AG04450 (cell line): ENCODE measurements at regions of chr14 and their contacts with region 1.

Region 1: GRCh38 chr14:99982537-99983250 is 82.5 kb upstream of the EVL start:
- DNase-seq: peak; percentile 45
- H3K4me3 ChIP-seq: no peak overlapping the region
- H3K27ac ChIP-seq: no peak overlapping the region
- H3K27me3 ChIP-seq: no peaks in the 10 kb centered on the region
- CTCF ChIP-seq: peak; percentile 93

Region 2: GRCh38 chr14:99872786-99873440 is 109.8 kb before region 1 on chr14:
- CTCF ChIA-PET with region 1: no interaction called
- POLR2A ChIA-PET with region 1: no interaction called
- DNase-seq: no peak
- H3K4me3 ChIP-seq: no peak overlapping the region
- H3K27ac ChIP-seq: no peak overlapping the region
- H3K27me3 ChIP-seq: no peaks in the 10 kb centered on the region
- CTCF ChIP-seq: no peak

Region 3: DNA sequence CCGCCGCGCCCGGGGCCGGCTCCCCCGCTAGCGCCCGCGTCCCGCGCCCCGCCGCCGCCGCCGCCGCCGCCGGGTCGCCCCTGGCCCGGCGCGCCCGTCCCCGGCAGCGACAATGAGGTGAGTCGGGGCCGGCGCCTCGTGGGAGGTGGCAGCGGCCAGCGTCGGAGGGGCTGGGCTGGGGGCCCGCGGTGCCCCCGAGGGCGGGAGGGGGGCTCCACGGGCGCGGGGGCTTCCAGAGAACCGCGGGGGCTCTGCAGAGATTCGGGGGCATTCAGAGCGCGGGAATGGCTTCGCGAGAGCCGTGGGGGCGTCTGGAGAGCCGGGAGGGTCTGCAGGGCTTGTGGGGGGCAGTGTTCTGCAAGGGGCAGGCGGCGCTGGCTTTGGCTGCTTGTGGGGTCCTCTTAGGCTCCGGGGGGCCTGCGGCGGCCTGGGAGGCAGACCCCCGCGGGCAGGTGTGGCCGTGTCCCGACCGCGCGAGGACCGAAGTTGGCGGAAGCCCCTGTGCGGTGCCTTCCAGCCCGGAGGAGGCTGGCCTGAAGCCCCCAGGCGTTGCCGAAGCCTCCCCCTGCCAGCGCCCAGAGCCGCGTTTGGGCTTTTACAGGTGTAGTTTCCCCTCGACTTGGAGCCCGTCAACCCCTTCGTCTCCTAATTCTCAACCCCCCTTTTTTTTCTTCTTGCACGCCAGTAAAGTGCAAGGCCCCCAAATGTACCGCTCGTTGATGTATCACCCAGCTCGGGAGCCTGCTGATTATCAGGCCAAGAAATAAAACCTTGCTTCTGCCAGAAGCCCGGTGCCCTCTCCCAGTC is 10.6 kb before region 1 on chr14:
- CTCF ChIA-PET with region 1: interaction called, 11 read pairs
- POLR2A ChIA-PET with region 1: no interaction called
- DNase-seq: no peak
- H3K4me3 ChIP-seq: peak overlapping the region; percentile 85
- H3K27ac ChIP-seq: no peak overlapping the region
- H3K27me3 ChIP-seq: no peaks in the 10 kb centered on the region
- CTCF ChIP-seq: no peak

Region 4: DNA sequence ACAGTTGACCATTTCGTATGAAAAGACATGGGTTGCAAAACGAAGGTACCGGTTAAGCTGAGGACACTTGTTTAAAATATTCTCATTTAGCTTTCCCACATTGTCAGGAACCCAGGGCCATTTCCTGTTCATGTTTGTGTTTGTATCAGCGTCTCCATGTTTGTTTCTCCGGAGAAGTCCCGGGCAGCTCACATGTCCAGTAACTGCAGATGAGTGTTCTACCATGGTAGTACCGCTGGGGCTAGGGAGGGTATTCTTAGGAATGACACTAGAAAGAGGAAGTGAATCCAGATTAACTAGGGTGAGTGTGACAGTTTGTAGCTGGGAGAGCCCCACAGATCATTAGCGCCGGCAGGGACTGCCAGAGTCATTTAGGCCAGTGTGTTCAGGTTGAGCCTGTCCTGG is 32.6 kb after region 1 on chr14:
- CTCF ChIA-PET with region 1: interaction called, 14 read pairs
- POLR2A ChIA-PET with region 1: no interaction called
- DNase-seq: no peak
- H3K4me3 ChIP-seq: no peak overlapping the region
- H3K27ac ChIP-seq: peak overlapping the region; percentile 62
- H3K27me3 ChIP-seq: no peaks in the 10 kb centered on the region
- CTCF ChIP-seq: no peak

Region 5: DNA sequence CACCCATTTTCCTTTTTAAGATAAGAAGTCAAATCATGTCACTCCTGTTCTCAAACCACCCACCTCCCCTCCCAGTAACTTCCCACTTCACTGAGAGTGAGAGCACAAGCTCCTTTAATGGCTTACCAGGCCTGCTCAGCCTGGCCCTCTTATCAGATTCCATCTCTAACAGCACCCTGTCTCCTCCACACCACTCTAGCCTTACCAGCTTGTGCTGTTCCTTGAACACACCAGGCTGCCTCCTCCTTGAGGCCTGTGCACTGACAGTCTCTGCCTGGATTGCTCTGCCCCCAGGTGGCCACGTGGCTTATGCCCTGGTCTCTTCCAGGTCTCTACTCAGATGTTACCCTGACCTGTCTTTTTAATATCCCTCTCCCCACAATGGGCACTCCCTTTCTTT is 42.4 kb after region 1 on chr14:
- CTCF ChIA-PET with region 1: interaction called, 35 read pairs
- POLR2A ChIA-PET with region 1: no interaction called
- DNase-seq: no peak
- H3K4me3 ChIP-seq: no peak overlapping the region
- H3K27ac ChIP-seq: no peak overlapping the region
- H3K27me3 ChIP-seq: no peaks in the 10 kb centered on the region
- CTCF ChIP-seq: peak; percentile 54

Region 6: GRCh38 chr14:100132161-100132902 is 149.6 kb after region 1 on chr14:
- CTCF ChIA-PET with region 1: no interaction called
- POLR2A ChIA-PET with region 1: no interaction called
- DNase-seq: no peak
- H3K4me3 ChIP-seq: no peak overlapping the region
- H3K27ac ChIP-seq: no peak overlapping the region
- H3K27me3 ChIP-seq: no peaks in the 10 kb centered on the region
- CTCF ChIP-seq: no peak

Region 7: DNA sequence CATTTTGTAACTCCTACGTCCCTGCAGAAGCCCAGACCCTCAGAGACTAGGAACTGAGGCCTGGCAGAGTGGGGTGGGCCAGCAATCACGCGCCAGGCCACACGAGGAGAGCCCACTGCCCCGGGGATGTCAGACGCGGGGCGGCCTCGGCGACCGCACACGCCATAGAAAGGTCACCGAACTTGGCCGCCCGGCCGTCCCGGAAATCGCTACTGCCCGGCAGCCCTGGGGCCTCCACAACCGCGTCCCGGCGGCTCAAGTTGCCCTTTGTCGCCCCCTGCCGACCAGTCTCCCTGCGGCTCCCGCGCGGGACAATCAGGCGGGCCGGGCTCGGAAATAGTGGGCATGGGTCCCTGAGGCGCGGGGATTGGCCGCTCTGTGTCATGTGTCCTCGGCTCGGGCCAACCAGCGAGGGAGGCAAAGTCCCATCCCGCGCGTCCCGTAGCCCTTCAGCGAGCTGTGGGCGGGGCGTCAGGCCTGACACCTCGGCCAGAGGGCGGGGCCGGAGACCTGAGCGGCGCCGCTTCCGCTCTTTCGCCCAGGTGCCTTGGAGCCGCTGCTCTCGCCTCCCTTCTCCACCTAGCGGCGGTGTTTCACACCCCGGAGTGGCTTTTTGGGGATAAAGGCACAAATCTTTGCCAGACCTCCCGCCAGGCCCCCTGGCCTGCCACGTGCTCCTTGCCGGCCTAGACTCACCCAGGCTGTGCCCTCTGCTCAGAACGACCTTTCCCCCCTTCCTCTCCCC is 210.2 kb after region 1 on chr14:
- CTCF ChIA-PET with region 1: interaction called, 42 read pairs
- POLR2A ChIA-PET with region 1: no interaction called
- DNase-seq: peak; percentile 88
- H3K4me3 ChIP-seq: peak overlapping the region; percentile 58
- H3K27ac ChIP-seq: peak overlapping the region; percentile 31
- H3K27me3 ChIP-seq: no peaks in the 10 kb centered on the region
- CTCF ChIP-seq: peak; percentile 80